ENCODE measurements at regions of chr2 and their contacts with region 1.

Region 1: DNA sequence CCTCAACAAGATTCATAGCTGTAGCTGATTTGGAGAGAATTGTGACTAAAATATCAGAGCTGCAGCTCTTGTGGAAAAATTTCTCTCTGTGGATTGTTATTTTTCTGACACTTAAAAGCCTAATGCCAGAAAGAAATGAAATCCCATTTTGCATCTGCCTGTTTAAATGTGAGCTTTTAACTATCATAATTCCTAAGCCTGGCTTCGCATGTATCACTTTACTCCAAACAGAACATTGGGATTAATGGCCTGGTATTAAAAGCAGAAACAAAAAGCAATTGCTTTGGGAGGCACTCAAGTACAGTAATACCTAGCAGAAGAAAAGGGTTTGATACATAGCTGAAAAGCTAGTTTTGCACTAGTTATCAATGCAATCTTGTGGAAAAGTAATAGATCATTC is 164.2 kb upstream of the FSHR start:
- DNase-seq: no peak
- ATAC-seq: no peak
- H3K4me3 ChIP-seq: no peak overlapping the region
- H3K27ac ChIP-seq: no peak overlapping the region
- H3K4me1 ChIP-seq: no peaks in the 10 kb centered on the region
- H3K27me3 ChIP-seq: no peaks in the 10 kb centered on the region
- CTCF ChIP-seq: no peak
- EP300 ChIP-seq: no peak
- POLR2A ChIP-seq: no peak
- RAD21 ChIP-seq: no peak

Region 2: DNA sequence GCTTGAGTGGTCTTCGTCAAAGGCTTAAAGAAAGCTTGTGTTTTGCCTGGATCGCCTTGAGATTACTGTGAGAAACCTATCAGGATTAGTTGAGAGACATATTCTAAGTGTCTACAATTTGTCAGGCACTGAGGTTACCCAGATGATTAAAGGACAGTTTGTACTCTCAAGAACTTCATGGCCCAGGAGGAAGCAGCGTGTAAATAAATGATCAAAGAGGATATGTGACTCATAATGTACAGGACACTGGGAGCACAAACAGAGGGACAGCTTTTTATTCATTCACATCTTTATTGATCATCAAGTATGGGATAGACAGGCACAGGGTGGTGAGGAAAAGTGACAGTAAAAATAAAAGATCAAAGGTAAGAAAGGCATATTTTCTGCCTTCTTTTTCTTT is 11.6 kb before region 1 on chr2:
- CTCF ChIA-PET with region 1: no interaction called
- POLR2A ChIA-PET with region 1: no interaction called
- in situ Hi-C with region 1: no loop called
- intact Hi-C with region 1: loop called (anchors 1 kb)
- DNase-seq: no peak
- ATAC-seq: no peak
- H3K4me3 ChIP-seq: no peak overlapping the region
- H3K27ac ChIP-seq: no peak overlapping the region
- H3K4me1 ChIP-seq: no peaks in the 10 kb centered on the region
- H3K27me3 ChIP-seq: no peaks in the 10 kb centered on the region
- CTCF ChIP-seq: no peak
- EP300 ChIP-seq: no peak
- POLR2A ChIP-seq: no peak
- RAD21 ChIP-seq: no peak

Measured in K562 (cell line).